ENCODE measurements at regions of chr4 and their contacts with region 1.

Region 1: GRCh38 chr4:445410-445809 is 53.5 kb downstream of the ZNF721 start:
- DNase-seq: no peak
- ATAC-seq: no peak
- H3K4me3 ChIP-seq: no peak overlapping the region
- H3K27ac ChIP-seq: no peak overlapping the region
- H3K4me1 ChIP-seq: no peaks in the 10 kb centered on the region
- H3K27me3 ChIP-seq: no peaks in the 10 kb centered on the region
- CTCF ChIP-seq: no peak
- POLR2A ChIP-seq: no peak
- RAD21 ChIP-seq: no peak

Region 2: DNA sequence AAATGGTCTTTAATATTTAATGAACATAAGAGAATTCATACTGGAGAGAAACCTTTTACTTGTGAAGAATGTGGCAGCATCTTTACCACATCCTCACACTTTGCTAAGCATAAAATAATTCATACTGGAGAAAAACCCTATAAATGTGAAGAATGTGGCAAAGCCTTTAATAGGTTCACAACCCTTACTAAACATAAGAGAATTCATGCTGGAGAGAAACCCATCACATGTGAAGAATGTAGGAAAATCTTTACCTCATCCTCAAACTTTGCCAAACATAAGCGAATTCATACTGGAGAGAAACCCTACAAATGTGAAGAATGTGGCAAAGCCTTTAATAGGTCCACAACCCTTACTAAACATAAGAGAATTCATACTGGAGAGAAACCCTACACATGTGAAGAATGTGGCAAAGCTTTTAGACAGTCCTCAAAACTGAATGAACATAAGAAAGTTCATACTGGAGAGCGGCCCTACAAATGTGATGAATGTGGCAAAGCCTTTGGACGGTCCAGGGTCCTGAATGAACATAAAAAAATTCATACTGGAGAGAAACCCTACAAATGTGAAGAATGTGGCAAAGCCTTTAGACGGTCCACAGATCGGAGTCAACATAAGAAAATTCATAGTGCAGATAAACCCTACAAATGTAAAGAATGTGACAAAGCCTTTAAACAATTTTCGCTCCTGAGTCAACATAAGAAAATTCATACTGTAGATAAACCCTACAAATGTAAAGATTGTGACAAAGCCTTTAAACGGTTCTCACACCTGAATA is 72.2 kb before region 1 on chr4:
- CTCF ChIA-PET with region 1: no interaction called
- POLR2A ChIA-PET with region 1: no interaction called
- dilution Hi-C with region 1: no loop called
- in situ Hi-C with region 1: no loop called
- intact Hi-C with region 1: loop called (anchors 10 kb)
- DNase-seq: no peak
- ATAC-seq: no peak
- H3K4me3 ChIP-seq: no peak overlapping the region
- H3K27ac ChIP-seq: no peak overlapping the region
- H3K4me1 ChIP-seq: no peaks in the 10 kb centered on the region
- H3K27me3 ChIP-seq: no peaks in the 10 kb centered on the region
- CTCF ChIP-seq: no peak
- POLR2A ChIP-seq: no peak
- RAD21 ChIP-seq: no peak

Region 3: DNA sequence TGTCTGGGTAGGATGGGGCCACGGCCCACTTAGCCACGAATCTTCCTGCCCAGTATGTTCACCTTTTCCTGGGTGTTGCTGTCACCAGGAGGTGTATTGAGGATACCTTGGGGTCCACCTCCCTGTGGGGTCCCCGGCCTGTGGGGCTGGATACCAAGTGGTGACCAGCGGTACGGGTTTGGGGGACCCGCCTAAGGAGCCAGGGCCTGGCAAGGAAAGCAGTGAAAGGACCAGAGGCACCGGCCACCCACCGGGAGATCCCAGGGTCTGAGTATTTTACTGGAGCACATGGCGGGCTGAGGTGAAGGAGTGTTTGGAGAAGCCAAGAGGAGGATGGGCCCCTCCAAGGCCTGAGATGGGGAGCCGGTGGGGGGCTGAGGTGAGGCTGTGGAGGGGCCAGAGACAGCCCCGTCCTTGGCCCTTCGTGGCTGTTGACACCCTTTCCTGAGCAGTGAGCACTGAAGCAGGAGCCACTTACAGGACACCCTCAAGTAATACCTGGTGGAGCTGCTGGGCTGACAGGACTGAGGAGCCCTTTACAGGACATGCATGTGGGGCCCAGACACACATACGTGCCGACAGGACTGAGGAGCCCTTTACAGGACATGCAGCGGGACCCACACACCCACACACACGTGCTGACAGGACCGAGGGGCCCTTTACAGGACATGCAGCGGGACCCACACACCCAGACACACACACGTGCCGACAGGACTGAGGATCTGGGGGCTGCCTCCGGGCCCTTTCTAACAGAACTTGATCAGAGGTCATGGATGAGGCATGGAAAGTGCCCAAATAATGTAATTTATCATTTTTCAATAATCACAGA is 92.2 kb after region 1 on chr4:
- CTCF ChIA-PET with region 1: no interaction called
- POLR2A ChIA-PET with region 1: no interaction called
- dilution Hi-C with region 1: no loop called
- in situ Hi-C with region 1: no loop called
- intact Hi-C with region 1: no loop called
- DNase-seq: no peak
- ATAC-seq: no peak
- H3K4me3 ChIP-seq: no peak overlapping the region
- H3K27ac ChIP-seq: no peak overlapping the region
- H3K4me1 ChIP-seq: no peaks in the 10 kb centered on the region
- H3K27me3 ChIP-seq: no peaks in the 10 kb centered on the region
- CTCF ChIP-seq: no peak
- POLR2A ChIP-seq: no peak
- RAD21 ChIP-seq: no peak